Mammary epithelial cell (primary cell): ENCODE measurements at regions of chr16 and their contacts with region 1.

Region 1: DNA sequence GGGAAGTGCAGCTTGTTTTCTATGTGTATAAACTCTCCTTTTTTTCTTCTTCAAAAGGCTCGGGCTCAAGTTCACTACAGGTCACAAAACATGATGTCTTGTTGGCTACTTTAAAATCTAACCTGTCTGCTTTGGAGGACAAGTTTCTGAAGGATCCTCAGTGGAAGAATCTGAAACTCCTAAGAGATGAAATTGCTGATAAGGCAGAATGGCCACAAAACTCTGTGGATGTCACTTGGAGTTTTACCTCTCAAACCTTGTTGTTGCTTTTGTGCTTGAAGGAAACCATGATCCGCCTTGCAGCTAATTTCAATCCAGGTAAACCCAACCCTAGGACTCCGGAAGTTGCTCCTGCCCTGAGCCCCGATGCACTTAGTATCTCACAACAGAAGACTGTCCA is 16.5 kb downstream of the TANGO6 start:
- DNase-seq: no peak
- H3K4me3 ChIP-seq: no peak overlapping the region
- H3K27ac ChIP-seq: no peak overlapping the region
- H3K4me1 ChIP-seq: no peaks in the 10 kb centered on the region
- H3K27me3 ChIP-seq: no peaks in the 10 kb centered on the region
- CTCF ChIP-seq: no peak

Region 2: GRCh38 chr16:68848786-68849185 is 11.0 kb before region 1 on chr16:
- CTCF ChIA-PET with region 1: no interaction called
- dilution Hi-C with region 1: no loop called
- in situ Hi-C with region 1: no loop called
- intact Hi-C with region 1: no loop called
- DNase-seq: no peak
- H3K4me3 ChIP-seq: no peak overlapping the region
- H3K27ac ChIP-seq: no peak overlapping the region
- H3K4me1 ChIP-seq: no peaks in the 10 kb centered on the region
- H3K27me3 ChIP-seq: no peaks in the 10 kb centered on the region
- CTCF ChIP-seq: no peak

Region 3: DNA sequence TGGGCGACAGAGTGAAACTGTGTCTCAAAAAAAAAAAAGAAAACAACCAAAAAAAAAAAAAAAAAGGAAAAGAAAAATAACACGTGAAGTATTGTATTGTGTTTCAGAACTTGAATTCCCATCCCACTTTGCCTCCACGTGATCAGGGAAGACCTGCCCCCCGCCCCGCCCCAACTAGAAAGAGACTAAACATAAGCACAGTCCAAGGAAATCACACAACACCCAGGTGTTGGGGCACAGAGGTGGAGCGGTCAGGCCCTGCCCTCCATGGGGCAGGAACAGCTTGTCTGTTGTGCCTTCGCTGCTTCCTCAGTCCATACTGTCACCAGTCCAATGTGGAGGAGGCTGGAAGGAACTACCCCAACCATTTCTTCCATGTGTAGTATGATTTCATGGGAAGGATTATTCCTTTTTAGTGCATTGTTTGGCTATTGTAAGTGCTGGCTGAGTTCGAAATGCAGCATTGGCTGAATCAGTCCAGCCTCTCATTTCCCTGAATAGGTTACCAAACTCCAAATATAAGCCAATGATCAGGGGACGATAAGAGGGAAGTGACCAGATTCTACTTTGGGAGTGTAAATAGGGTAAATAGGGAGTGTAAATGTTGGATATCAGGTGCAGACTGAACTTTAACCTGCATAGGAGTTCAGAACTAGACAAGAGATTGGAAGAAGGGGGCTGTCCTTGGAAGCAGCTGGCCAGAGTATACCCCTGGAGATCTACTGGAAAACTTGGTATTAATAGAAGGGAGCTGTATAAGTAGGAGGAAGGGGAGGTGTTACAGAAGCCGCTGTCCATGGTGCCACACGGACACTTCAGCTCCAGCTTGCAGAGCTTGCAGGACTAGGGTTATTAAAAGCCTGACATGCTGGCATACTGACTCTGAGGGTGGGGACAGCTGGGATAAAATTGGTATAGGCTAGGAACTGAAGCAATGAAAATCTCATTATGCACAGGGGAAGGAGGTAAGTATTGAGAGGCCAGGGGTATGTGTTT is 34.2 kb after region 1 on chr16:
- CTCF ChIA-PET with region 1: no interaction called
- dilution Hi-C with region 1: loop called (anchors 5 kb)
- in situ Hi-C with region 1: no loop called
- intact Hi-C with region 1: no loop called
- DNase-seq: no peak
- H3K4me3 ChIP-seq: no peak overlapping the region
- H3K27ac ChIP-seq: no peak overlapping the region
- H3K4me1 ChIP-seq: no peaks in the 10 kb centered on the region
- H3K27me3 ChIP-seq: no peaks in the 10 kb centered on the region
- CTCF ChIP-seq: no peak

Region 4: GRCh38 chr16:68927018-68927417 is 67.2 kb after region 1 on chr16:
- CTCF ChIA-PET with region 1: no interaction called
- dilution Hi-C with region 1: loop called (anchors 5 kb)
- in situ Hi-C with region 1: no loop called
- intact Hi-C with region 1: no loop called
- DNase-seq: no peak
- H3K4me3 ChIP-seq: no peak overlapping the region
- H3K27ac ChIP-seq: no peak overlapping the region
- H3K4me1 ChIP-seq: peaks cover 22% of the 10 kb centered on the region
- H3K27me3 ChIP-seq: no peaks in the 10 kb centered on the region
- CTCF ChIP-seq: no peak

Region 5: GRCh38 chr16:69019811-69020210 is 160.0 kb after region 1 on chr16:
- CTCF ChIA-PET with region 1: no interaction called
- dilution Hi-C with region 1: no loop called
- in situ Hi-C with region 1: no loop called
- intact Hi-C with region 1: no loop called
- DNase-seq: no peak
- H3K4me3 ChIP-seq: no peak overlapping the region
- H3K27ac ChIP-seq: no peak overlapping the region
- H3K4me1 ChIP-seq: peaks cover 13% of the 10 kb centered on the region
- H3K27me3 ChIP-seq: no peaks in the 10 kb centered on the region
- CTCF ChIP-seq: no peak